ENCODE measurements at regions of chr20 and their contacts with region 1.

Region 1: GRCh38 chr20:20360464-20360863 is 7.4 kb upstream of the INSM1 start:
- DNase-seq: peak; percentile 73
- CTCF ChIP-seq: peak; percentile 78

Region 2: GRCh38 chr20:20237093-20237959 is 123.1 kb before region 1 on chr20:
- in situ Hi-C with region 1: no loop called
- DNase-seq: peak; percentile 72
- CTCF ChIP-seq: peak; percentile 78

Region 3: GRCh38 chr20:20568604-20569205 is 208.2 kb after region 1 on chr20:
- in situ Hi-C with region 1: loop called (anchors 10 kb)
- DNase-seq: peak; percentile 29
- CTCF ChIP-seq: peak; percentile 78

Region 4: GRCh38 chr20:21166801-21167200 is 806.3 kb after region 1 on chr20:
- in situ Hi-C with region 1: no loop called
- DNase-seq: no peak
- CTCF ChIP-seq: no peak